Heart right ventricle (tissue), 16 donors: ENCODE measurements at regions of chr1 and their contacts with region 1.

Region 1: GRCh38 chr1:246002725-246003441 is 504.2 kb downstream of the SMYD3 start:
- DNase-seq: peak; percentile 84 to 85
- ATAC-seq: peak; percentile 60 to 86 (median 80)
- H3K4me3 ChIP-seq: no peak overlapping the region
- H3K27ac ChIP-seq: no peak overlapping the region
- H3K4me1 ChIP-seq: peaks cover 0 to 9% (median 4%) of the 10 kb centered on the region in 9 donors
- H3K27me3 ChIP-seq: no peaks in the 10 kb centered on the region
- CTCF ChIP-seq: peak; percentile 82 to 92 (median 90)

Region 2: GRCh38 chr1:245337829-245338484 is 664.9 kb before region 1 on chr1:
- intact Hi-C with region 1: loop called in 1 of 10 experiments (anchors 10 kb)
- DNase-seq: peak in 1 of 2 donors; percentile 27
- ATAC-seq: peak; percentile 29 to 91 (median 79)
- H3K4me3 ChIP-seq: no peak overlapping the region
- H3K27ac ChIP-seq: peak overlapping the region in 6 of 10 donors; percentile 2 to 60 (median 40)
- H3K4me1 ChIP-seq: peaks cover 0 to 6% (median 0%) of the 10 kb centered on the region in 9 donors
- H3K27me3 ChIP-seq: no peaks in the 10 kb centered on the region
- CTCF ChIP-seq: no peak

Region 3: DNA sequence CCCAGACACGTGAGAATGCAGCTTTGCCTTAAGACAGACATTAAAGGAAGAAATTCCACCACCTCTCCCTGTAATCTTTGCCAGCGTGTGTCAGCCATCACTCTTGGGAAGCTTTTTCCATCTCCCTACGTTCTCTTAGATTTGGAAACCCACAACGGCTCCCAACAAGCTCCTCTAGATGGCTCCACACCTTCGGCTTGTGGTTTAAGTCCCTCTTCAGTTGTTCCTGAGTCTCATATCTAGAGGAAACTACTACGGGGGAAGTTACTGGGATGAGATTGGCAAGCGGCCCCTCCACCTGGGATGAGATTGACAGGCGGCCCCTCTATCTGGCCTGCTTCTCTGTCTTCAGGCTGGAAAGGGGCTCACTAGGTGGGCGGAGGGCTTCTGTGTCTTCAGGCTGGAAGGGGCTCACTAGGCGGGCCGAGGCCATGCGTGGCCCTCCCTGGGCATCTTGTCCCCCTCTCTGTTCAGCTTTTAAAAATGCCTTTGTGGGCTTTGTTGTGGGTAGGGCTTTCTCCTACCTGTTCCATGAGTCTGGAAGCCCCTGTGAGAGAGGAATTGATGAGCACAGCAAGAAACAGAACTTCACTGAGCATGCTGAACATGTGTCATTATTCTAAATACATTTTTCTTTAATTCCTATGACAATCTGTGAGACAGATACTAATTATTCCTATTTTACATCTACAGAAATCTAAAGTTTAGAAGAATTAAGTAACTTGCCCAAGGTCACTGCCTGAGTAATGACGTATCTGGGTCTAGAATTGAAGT is 177.6 kb before region 1 on chr1:
- intact Hi-C with region 1: loop called in 7 of 10 experiments (anchors 2 to 10 kb)
- DNase-seq: peak in 1 of 2 donors; percentile 10
- ATAC-seq: peak in 7 of 8 donors; percentile 38 to 85 (median 71)
- H3K4me3 ChIP-seq: no peak overlapping the region
- H3K27ac ChIP-seq: no peak overlapping the region
- H3K4me1 ChIP-seq: no peaks in the 10 kb centered on the region
- H3K27me3 ChIP-seq: no peaks in the 10 kb centered on the region
- CTCF ChIP-seq: peak in 7 of 9 donors; percentile 26 to 56 (median 41)

Region 4: DNA sequence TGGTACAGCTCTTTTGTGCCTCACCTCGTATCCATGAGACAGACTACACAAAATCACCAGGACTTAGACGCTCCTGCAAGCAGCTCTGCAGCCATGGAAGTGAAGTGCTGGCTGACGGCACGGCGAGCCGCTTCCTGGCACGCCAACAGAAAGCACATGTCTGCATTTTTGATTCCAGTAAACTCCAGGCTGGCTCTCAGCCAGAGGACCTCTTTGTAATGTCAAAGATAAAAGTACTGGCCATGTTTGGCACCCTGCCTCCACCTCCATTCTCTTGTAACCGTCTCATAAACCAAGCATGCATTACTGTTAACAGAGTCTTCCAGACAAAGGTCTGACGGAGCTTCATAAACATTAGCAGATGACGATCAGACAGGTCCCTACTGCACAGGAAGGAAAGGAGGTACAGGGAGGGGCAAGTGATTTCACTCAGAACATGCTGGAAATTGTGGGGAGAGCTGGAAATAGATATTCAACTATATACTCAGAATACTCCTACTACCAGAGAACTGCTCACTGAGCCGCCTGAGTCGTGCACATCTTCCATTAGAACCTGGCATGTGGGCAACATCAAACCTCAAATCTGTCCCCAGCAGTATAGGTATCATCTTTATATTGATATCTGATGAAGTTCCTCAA is 127.8 kb before region 1 on chr1:
- intact Hi-C with region 1: loop called in 2 of 10 experiments (anchors 5 to 10 kb)
- DNase-seq: peak; percentile 70 to 90
- ATAC-seq: peak; percentile 85 to 95 (median 92)
- H3K4me3 ChIP-seq: peak overlapping the region in 1 of 10 donors; percentile 1
- H3K27ac ChIP-seq: peak overlapping the region in 8 of 10 donors; percentile 1 to 70 (median 58)
- H3K4me1 ChIP-seq: peaks cover 3 to 40% (median 17%) of the 10 kb centered on the region in 9 donors
- H3K27me3 ChIP-seq: no peaks in the 10 kb centered on the region
- CTCF ChIP-seq: no peak

Region 5: DNA sequence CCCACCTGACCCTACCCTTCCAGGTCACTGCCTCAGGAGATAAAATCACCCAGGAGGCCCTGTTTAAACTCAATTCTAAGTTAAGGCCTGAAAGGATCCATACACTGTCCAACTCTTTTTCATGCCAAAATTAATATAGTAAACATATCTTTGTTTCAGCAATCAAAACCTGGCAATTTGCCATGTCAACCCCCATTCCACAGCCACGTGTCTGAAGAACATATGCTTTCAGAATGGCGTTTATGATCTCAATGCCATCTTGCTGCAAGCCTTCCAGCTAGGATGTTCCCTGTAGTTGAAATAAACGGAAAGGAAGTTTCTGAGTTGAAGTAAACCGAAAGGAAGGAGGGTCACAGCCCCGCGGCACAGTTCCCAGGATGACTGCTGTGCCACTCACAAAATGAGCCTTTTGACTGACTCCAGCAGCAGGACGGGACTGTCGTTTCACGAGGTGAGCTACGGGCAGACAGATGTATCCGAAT is 32.2 kb after region 1 on chr1:
- intact Hi-C with region 1: no loop called
- DNase-seq: no peak
- ATAC-seq: no peak
- H3K4me3 ChIP-seq: no peak overlapping the region
- H3K27ac ChIP-seq: no peak overlapping the region
- H3K4me1 ChIP-seq: peaks cover 0 to 7% (median 0%) of the 10 kb centered on the region in 9 donors
- H3K27me3 ChIP-seq: no peaks in the 10 kb centered on the region
- CTCF ChIP-seq: no peak

Region 6: GRCh38 chr1:246048693-246049092 is 45.8 kb after region 1 on chr1:
- intact Hi-C with region 1: no loop called
- DNase-seq: no peak
- ATAC-seq: no peak
- H3K4me3 ChIP-seq: no peak overlapping the region
- H3K27ac ChIP-seq: no peak overlapping the region
- H3K4me1 ChIP-seq: no peaks in the 10 kb centered on the region
- H3K27me3 ChIP-seq: no peaks in the 10 kb centered on the region
- CTCF ChIP-seq: no peak